ENCODE measurements at regions of chr17 and their contacts with region 1.

Region 1: DNA sequence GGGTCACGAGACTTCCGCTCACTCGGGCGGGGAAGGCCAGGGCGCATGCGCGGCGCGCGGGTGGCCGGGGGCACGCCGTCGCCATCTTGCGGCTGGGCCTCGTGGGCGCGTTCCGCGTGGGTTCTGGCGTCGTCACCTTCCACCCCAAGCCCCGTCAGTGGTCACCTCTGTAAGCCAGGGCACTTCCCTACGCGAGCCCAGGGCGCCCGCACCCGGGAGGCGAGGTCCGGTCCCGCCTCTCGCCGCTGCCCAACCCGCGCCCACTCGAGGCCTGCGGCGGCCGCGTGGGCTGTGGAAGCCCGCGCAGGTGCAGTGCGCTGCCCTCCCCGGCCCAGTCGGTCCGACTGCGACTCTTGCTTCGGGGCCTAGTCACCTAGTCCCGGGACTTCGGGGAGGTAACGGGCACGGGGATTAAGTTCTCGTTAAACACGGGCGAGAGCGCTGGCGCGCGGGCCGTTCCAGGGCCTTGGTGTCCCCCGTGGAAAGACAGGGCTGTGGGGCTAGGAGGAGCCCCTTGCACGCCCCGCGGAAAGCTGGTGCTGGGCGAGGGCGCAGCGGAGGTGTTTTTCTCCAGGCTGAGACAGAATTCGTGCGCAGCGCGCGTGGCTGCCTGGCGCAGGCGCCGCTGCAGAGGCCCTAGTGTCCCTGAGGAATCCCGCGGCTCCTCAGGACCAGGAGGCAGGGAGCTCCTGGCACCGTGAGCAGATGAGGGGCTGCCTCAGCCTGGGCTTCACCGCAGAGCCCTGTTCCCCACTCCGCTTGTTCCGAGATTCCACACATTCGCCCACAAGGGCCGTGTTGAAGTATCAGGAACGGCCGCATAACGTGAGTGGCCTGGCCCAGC is 472 bp upstream of the ARHGDIA start:
- DNase-seq: peak; percentile 95 to 96
- ATAC-seq: no peak
- H3K4me3 ChIP-seq: peak overlapping the region; percentile 99
- H3K27ac ChIP-seq: peak overlapping the region; percentile 97 to 100
- H3K4me1 ChIP-seq: peaks cover 41% of the 10 kb centered on the region
- CTCF ChIP-seq: no peak; the same call in 2 of the 3 replicates
- EP300 ChIP-seq: no peak
- POLR2A ChIP-seq: peak; percentile 77
- RAD21 ChIP-seq: no peak; a peak in 1 of 5 replicates

Region 2: DNA sequence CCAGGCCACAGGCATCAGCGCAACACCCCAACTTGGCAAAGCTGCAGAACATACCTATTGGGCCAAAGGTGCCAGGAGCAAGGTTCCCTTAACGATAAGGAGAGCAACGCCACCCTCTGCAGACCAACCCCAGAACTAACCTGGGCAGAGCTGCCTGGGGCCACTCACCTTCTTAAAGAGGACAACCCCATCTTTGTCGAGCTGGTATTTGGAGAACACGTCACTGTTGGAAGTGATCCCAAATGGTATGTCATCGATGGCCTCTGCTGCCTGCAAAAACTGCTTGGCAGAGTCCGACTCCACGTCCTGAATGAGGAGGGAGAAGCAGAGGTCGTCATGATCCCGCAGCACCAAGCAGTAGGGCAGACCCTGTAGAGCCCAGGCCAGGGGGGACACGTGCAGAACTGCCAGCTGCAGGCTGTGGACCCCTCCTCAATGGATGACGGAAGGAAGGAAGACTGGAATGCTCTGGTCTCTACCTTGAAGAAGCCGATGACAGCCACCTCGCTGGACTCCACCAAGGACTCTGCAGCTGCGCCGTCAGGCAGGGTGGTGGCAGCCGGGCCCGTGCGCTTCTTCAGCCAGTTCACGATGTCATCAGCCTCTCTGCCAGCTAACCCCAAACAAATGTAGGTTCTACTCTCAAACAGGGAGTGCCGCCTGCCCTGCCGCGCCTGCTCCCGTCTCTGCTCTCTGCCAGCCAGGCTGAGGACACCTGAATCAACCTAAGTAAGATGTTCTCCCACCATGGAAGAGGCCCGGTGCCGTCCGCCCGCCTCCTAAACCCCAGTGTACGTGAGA is 16.4 kb before region 1 on chr17:
- CTCF ChIA-PET with region 1: interaction called, 15 read pairs
- POLR2A ChIA-PET with region 1: no interaction called
- DNase-seq: no peak
- ATAC-seq: peak; percentile 32 to 50; a peak in 4 of 6 replicates
- H3K4me3 ChIP-seq: no peak overlapping the region
- H3K27ac ChIP-seq: no peak overlapping the region
- H3K4me1 ChIP-seq: peaks cover 12% of the 10 kb centered on the region; the same call in 2 of the 3 replicates
- CTCF ChIP-seq: no peak
- EP300 ChIP-seq: no peak
- POLR2A ChIP-seq: no peak
- RAD21 ChIP-seq: peak in 1 of 2 experiments; percentile 47; a peak in 3 of 5 replicates

Region 3: DNA sequence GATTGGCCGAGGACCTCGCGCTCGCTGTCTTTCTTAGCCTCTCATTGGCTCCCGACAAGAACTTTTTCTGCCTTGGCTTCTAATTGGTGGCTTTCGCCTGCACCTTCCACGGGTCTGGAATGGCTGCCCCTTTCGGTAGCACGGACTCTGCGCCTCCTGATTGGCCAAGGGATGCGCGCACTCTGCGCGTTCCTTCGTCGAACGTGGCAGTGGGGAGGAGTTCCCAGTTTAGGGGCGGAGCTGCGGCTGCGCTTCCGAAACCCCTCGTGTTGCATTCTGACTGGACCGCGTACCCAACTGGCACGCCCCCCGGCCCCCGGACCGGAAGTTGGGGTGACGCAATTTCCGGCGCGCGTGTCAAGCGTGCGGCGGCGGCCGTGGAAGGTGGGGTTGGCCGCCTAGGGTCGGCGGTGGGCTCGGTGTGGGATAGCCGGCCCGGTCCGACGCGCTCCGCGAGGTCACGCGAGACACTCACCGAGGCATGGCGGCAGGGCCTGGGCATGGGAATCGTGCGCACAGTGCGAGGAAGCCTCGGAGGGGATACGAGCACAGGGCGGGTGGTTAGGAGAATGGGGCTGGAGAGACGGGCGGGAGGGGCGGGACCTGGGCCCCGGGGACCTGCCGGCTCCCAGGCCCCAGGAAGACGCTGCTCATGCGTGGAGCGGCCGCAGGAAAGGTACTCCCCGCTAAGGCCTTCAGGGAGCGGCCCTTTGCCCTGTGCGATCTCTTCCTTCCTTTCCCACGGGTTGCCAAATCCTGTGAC is 10.7 kb before region 1 on chr17:
- CTCF ChIA-PET with region 1: interaction called, 15 read pairs
- POLR2A ChIA-PET with region 1: interaction called, 6 read pairs
- DNase-seq: peak; percentile 100
- ATAC-seq: peak; percentile 84 to 92
- H3K4me3 ChIP-seq: peak overlapping the region; percentile 72
- H3K27ac ChIP-seq: peak overlapping the region; percentile 91 to 94
- H3K4me1 ChIP-seq: peaks cover 35% of the 10 kb centered on the region
- CTCF ChIP-seq: no peak
- EP300 ChIP-seq: no peak
- POLR2A ChIP-seq: peak; percentile 98
- RAD21 ChIP-seq: peak in 1 of 2 experiments; percentile 15; a peak in 1 of 5 replicates

Region 4: DNA sequence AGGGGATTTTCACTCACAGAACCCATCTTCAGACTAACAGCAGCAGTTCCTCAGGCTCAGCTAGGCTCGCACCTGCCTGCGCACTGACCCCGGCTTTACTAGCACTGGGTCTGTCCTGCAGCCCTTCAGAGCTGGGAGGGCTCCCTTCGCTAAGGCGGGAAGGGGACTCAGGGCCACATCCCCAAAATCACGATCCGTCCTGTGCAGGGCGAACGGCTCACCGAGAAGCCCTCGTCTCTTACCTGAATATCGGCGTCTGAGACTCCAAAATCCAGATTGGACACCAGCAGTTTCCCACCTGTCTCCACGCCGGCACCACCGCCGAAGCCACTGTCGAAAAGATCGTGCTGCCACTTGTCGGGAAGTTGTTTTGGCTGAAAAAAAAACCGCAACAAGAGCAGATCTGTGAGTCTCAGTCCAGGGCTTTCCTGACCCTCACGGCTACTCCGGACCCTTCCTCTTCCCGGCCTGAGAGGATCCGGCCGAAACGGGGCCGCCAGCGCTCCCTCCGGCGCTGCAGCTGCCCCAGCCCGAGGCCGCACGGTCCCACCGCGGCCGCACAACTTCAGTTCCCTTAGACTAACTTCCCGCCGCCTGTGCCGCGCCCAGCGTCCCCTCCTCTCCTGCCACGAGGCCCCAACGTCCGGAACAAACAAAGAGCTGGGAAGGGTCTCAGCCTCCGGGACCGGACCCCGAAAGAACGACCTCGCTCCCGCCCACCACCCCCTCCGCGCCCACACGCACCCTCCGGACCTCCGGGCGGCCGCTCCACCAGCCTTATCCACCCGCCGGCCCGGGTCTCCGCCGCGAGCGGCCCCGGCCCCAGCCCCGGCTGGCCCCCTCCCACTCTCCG is 19.1 kb after region 1 on chr17:
- CTCF ChIA-PET with region 1: interaction called, 126 read pairs
- POLR2A ChIA-PET with region 1: interaction called, 5 read pairs
- DNase-seq: no peak
- ATAC-seq: no peak
- H3K4me3 ChIP-seq: peak overlapping the region; percentile 90
- H3K27ac ChIP-seq: peak overlapping the region; percentile 94 to 98
- H3K4me1 ChIP-seq: peaks cover 27% of the 10 kb centered on the region
- CTCF ChIP-seq: no peak
- EP300 ChIP-seq: no peak
- POLR2A ChIP-seq: no peak
- RAD21 ChIP-seq: no peak

Region 5: GRCh38 chr17:81898141-81898866 is 26.7 kb after region 1 on chr17:
- CTCF ChIA-PET with region 1: interaction called, 19 read pairs
- POLR2A ChIA-PET with region 1: no interaction called
- DNase-seq: peak; percentile 69 to 87
- ATAC-seq: peak; percentile 82 to 84
- H3K4me3 ChIP-seq: no peak overlapping the region
- H3K27ac ChIP-seq: peak overlapping the region; percentile 75 to 88
- H3K4me1 ChIP-seq: peaks cover 34% of the 10 kb centered on the region
- CTCF ChIP-seq: no peak
- EP300 ChIP-seq: no peak
- POLR2A ChIP-seq: no peak
- RAD21 ChIP-seq: 0 out of 5 replicates have a peak, but pooled peaks of 1 of the 2 experiments have one; percentile 13

Region 6: DNA sequence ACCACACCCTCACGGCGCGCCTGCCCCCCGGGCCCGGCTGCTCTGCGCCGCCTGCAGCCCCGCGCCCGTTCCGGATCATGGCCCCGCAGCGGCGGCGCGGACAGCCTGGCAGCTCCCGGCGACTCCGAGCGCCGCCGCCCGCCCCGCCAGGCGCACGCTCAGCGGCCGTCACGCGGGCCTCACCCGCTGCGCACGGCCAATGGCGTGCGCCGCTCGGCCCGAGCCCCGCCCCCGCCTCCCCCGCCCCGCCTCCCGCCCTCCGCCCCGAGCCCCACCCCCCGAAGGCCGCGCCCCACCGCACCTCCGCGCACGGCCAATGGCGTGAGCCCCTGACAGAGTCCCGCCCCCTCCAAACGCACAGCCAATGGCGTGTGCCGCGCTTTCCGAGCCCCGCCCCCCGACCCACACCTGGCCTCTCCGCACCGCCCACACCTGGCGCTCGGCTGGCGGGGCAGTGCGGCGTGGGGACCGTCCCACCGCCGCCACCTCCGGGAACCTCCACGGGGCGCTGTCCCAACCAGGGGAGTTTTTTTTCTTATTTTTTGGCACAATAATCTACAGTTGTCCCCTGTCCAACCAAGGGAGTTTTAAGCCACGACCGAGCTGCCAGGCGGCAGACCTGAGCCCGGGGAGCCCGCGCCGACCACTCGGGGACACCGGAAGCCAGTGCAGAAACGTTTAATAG is 39.8 kb after region 1 on chr17 and contains the start of gene PCYT2:
- CTCF ChIA-PET with region 1: interaction called, 13 read pairs
- POLR2A ChIA-PET with region 1: no interaction called
- DNase-seq: peak; percentile 93 to 99
- ATAC-seq: peak; percentile 72 to 83
- H3K4me3 ChIP-seq: peak within 1 kb of the TSS; percentile 71
- H3K27ac ChIP-seq: peak within 1 kb of the TSS; percentile 62 to 88
- H3K4me1 ChIP-seq: peaks cover 14% of the 10 kb centered on the region
- CTCF ChIP-seq: no peak
- EP300 ChIP-seq: no peak
- POLR2A ChIP-seq: peak; percentile 31; the same call in 1 of the 2 replicates
- RAD21 ChIP-seq: no peak
- polyA plus RNA-seq, gene PCYT2: 7.1 and 7.7 TPM in 2 replicates

Region 7: GRCh38 chr17:81927653-81928543 is 56.3 kb after region 1 on chr17 and contains the start of gene MAFG:
- CTCF ChIA-PET with region 1: interaction called, 36 read pairs
- POLR2A ChIA-PET with region 1: interaction called, 5 read pairs
- DNase-seq: peak; percentile 96 to 98
- ATAC-seq: peak; percentile 20 to 40
- H3K4me3 ChIP-seq: peak within 1 kb of the TSS; percentile 90
- H3K27ac ChIP-seq: peak within 1 kb of the TSS; percentile 96 to 98
- H3K4me1 ChIP-seq: peaks cover 36% of the 10 kb centered on the region
- CTCF ChIP-seq: peak; percentile 74
- EP300 ChIP-seq: no peak
- POLR2A ChIP-seq: peak; percentile 33
- RAD21 ChIP-seq: peak in 1 of 2 experiments; percentile 54; a peak in 3 of 5 replicates
- polyA plus RNA-seq, gene MAFG: 41.6 and 47.9 TPM in 2 replicates